Activated T-helper 2 cell treated with anti-CD3 and anti-CD28 coated beads, Interferon-gamma antibody, Interleukin-2, Interleukin-4, amounts not matched to agents 10 μg/mL and 5 μg/mL and 100 μg/mL, durations not matched to agents 14 hours and 24 hours and 36 hours (primary cell): ENCODE measurements at regions of chr4 and their contacts with region 1.

Region 1: DNA sequence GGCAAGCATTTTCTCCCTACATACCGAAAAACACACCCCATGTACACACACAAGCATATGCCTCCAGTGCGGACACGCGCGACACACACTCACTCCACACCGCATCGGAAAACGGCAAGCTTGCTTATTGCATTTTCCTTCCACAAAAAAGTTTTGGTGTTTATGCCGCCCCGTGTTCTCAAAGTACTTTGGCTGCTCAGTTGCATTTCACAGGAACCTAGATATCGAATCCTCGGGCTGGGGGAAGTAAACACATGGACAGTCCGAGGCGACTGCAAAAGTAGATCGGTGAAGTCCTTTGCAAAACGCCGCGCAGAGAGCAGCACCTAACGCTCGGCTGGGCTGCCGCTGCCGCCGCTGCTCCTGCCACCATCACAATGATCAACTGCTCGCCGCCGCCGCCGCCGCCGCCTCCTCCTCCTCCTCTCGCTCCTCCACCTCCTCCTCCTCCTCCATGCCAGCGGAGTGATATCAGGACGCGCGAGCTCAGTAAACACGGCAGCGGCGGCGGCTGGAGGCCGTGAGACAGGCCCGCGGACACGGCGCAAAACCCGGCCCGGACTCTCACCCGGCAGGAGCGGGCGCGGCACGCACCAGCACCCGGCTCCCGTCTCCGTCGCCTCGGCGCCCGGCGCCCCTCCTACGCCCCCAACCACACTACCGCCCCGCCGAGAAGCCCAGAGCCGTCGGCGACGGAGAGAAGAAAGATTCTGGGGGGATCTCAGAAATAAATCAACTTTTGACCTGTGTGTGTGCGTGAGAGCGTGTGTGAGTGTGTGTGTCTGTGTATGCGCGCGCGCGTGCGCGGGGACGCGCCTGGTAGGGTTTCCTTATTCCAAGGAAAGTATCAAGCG is at the start of gene MAML3:
- DNase-seq: peak; percentile 82
- H3K4me3 Mint-ChIP-seq: peak within 1 kb of the TSS; percentile 91
- H3K27ac Mint-ChIP-seq: peak within 1 kb of the TSS; percentile 33
- H3K4me1 Mint-ChIP-seq: peaks cover 39% of the 10 kb centered on the region
- H3K27me3 Mint-ChIP-seq: peaks cover 16% of the 10 kb centered on the region
- total RNA-seq, gene MAML3: 3.0 and 3.3 TPM in 2 replicates

Region 2: GRCh38 chr4:139301113-139301820 is 852.7 kb before region 1 on chr4 and contains the start of gene NAA15:
- intact Hi-C with region 1: loop called (anchors 5 kb)
- DNase-seq: peak; percentile 98
- H3K4me3 Mint-ChIP-seq: peak within 1 kb of the TSS; percentile 98
- H3K27ac Mint-ChIP-seq: peak within 1 kb of the TSS; percentile 99
- H3K4me1 Mint-ChIP-seq: peaks cover 48% of the 10 kb centered on the region
- H3K27me3 Mint-ChIP-seq: no peaks in the 10 kb centered on the region
- total RNA-seq, gene NAA15: 86.7 and 97.4 TPM in 2 replicates

Region 3: DNA sequence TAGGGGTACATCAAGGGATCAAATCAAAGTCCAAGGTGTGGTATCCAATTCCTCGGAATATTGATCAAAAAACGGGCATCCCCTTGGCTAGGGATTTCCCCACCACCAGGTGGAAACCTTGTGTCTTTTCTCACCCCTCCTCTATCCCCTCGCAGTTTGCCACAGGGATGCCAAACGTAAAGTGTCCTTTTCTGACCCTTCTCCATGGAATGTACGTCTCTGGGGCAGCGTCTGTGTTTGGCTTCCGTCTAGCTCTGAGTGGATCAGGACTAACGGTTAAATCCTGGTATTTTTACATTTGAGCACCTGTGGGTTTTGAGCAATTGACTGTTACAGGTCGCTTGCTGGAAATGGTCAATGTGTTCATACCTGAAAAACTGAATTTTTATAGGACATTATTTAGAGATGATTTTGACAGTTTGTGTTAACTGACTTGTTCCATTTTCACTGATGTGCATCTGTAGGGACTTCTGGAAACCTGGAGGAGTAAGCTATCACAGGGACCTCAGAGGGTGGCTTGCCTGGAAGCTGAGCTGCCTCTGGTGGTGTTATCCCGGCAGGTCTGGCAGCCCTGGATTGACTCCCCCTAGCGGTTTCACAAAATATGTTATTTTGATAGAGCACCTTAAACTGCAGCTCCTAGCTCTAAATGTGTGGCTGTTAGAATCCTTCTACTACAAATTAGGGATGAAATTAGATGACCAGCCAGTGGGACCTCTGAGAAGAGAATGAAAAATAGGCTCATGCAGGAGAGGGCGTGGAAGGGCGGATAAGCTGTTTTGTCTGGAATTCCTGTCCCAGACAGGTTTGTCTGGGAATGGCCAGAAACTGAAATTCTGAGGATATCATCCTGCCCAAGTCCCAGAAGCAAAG is 497.1 kb before region 1 on chr4:
- intact Hi-C with region 1: loop called (anchors 2 kb)
- DNase-seq: peak; percentile 36
- H3K4me3 Mint-ChIP-seq: peak overlapping the region; percentile 77
- H3K27ac Mint-ChIP-seq: peak overlapping the region; percentile 93
- H3K4me1 Mint-ChIP-seq: peaks cover 27% of the 10 kb centered on the region
- H3K27me3 Mint-ChIP-seq: no peaks in the 10 kb centered on the region

Region 4: GRCh38 chr4:139950568-139950967 is 203.4 kb before region 1 on chr4:
- intact Hi-C with region 1: loop called (anchors 1 kb)
- DNase-seq: peak; percentile 43
- H3K4me3 Mint-ChIP-seq: peak overlapping the region; percentile 40
- H3K27ac Mint-ChIP-seq: peak overlapping the region; percentile 83
- H3K4me1 Mint-ChIP-seq: peaks cover 27% of the 10 kb centered on the region
- H3K27me3 Mint-ChIP-seq: peaks cover 9% of the 10 kb centered on the region

Region 5: GRCh38 chr4:140071806-140072205 is 82.1 kb before region 1 on chr4:
- intact Hi-C with region 1: loop called (anchors 1 kb)
- DNase-seq: peak; percentile 72
- H3K4me3 Mint-ChIP-seq: peak overlapping the region; percentile 47
- H3K27ac Mint-ChIP-seq: peak overlapping the region; percentile 60
- H3K4me1 Mint-ChIP-seq: peaks cover 64% of the 10 kb centered on the region
- H3K27me3 Mint-ChIP-seq: peaks cover 18% of the 10 kb centered on the region

Region 6: GRCh38 chr4:140116442-140117104 is 37.4 kb before region 1 on chr4:
- intact Hi-C with region 1: loop called (anchors 2 kb)
- DNase-seq: peak; percentile 28
- H3K4me3 Mint-ChIP-seq: no peak overlapping the region
- H3K27ac Mint-ChIP-seq: peak overlapping the region; percentile 46
- H3K4me1 Mint-ChIP-seq: peaks cover 43% of the 10 kb centered on the region
- H3K27me3 Mint-ChIP-seq: peaks cover 13% of the 10 kb centered on the region

Region 7: GRCh38 chr4:140252742-140253555 is 99.0 kb after region 1 on chr4:
- intact Hi-C with region 1: loop called (anchors 1 kb)
- DNase-seq: peak; percentile 39
- H3K4me3 Mint-ChIP-seq: peak overlapping the region; percentile 68
- H3K27ac Mint-ChIP-seq: peak overlapping the region; percentile 56
- H3K4me1 Mint-ChIP-seq: peaks cover 36% of the 10 kb centered on the region
- H3K27me3 Mint-ChIP-seq: peaks cover 17% of the 10 kb centered on the region